ENCODE measurements at regions of chr1 and their contacts with region 1.

Region 1: DNA sequence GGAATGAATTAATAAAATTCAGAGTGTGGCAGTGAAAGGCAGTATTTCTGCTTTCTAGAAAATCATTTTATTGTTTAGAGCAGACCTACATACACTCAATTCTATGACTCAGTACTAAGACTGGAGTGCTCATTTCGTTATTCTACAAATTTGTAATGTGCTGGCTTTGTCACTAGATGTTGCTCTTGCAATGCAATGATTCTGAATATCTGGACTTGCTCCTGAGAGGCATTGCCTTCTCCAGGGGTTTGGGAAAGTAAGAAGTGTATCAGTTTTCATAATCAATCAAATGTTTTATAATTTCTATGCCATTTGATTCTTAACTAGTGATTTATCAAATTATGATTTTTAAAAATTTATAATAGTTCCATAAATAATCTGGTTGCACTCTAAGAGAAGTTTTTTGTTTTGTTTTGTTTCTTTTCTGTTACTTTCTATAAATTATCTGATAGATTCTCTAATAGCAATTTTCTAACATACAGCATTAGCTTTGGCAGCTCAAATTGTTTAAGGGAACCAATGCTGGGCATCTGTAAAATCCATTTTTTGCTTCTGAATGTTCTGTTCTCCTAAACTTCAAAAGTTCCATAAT is 280.5 kb upstream of the SGIP1 start:
- DNase-seq: peak in 1 of 2 experiments; percentile 73
- H3K4me3 ChIP-seq: no peak overlapping the region
- H3K4me1 ChIP-seq: peaks cover 20% of the 10 kb centered on the region
- H3K27me3 ChIP-seq: no peaks in the 10 kb centered on the region

Region 2: DNA sequence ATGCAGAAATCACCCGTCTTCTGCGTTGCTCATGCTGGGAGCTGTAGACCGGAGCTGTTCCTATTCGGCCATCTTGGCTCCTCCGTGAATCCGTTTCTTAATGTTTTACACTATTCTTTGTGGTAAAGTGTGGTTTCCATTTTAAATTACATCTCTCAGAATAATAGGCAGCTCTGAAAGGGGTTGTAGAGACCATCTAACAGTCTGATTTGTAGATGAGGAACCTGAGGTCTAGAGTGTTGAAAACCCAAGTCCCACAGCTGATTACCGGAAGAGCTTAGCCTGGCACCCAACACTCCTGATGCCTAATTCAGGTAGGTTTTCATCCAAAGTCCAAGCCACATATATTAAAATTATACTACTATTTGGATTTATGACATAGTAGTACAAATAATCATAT is 688.9 kb before region 1 on chr1:
- in situ Hi-C with region 1: no loop called
- DNase-seq: no peak
- H3K4me3 ChIP-seq: no peak overlapping the region
- H3K4me1 ChIP-seq: no peaks in the 10 kb centered on the region
- H3K27me3 ChIP-seq: no peaks in the 10 kb centered on the region

Region 3: DNA sequence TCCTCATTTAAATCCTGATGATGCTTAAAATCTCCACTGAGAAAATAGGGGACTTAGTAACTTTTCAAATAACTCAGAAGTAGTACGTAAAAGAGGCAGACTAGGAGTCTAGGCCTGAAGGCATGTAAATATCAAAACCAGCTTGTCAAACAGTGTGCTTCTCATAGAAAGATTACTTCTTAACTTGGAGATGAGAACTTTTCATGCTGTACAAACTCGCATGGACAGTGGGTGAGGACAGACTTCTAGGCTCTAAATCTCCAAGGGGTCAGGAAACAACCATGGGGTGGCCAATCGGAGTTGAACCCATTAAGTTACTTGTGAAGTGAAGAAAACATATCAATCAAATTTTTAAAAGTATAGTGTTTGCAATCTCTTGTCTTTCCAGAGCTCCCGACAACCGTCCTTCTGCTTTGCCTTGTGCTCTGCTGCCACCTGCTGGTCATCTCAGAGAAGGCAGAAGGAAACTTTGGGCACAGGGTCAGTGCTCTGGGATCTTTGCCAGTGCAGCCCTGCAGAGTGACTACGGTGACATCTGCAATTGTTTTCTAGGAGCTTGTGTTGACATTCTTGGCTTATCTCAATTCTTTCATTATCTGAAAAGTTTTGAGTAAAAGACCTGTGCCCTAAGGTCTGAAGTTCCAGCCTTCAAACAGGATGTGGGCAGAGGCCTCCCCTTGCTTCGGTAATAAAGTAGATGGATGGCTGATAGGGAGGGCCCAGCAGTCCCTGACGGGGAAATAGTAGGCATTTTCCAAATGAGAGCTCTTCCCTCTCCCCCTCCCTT is 565.8 kb before region 1 on chr1:
- in situ Hi-C with region 1: no loop called
- DNase-seq: peak; percentile 59 to 90
- H3K4me3 ChIP-seq: no peak overlapping the region
- H3K4me1 ChIP-seq: no peaks in the 10 kb centered on the region
- H3K27me3 ChIP-seq: no peaks in the 10 kb centered on the region

Region 4: GRCh38 chr1:65698590-65698989 is 554.8 kb before region 1 on chr1:
- in situ Hi-C with region 1: no loop called
- DNase-seq: no peak
- H3K4me3 ChIP-seq: no peak overlapping the region
- H3K4me1 ChIP-seq: no peaks in the 10 kb centered on the region
- H3K27me3 ChIP-seq: no peaks in the 10 kb centered on the region; the same call in none of the 2 replicates

Region 5: DNA sequence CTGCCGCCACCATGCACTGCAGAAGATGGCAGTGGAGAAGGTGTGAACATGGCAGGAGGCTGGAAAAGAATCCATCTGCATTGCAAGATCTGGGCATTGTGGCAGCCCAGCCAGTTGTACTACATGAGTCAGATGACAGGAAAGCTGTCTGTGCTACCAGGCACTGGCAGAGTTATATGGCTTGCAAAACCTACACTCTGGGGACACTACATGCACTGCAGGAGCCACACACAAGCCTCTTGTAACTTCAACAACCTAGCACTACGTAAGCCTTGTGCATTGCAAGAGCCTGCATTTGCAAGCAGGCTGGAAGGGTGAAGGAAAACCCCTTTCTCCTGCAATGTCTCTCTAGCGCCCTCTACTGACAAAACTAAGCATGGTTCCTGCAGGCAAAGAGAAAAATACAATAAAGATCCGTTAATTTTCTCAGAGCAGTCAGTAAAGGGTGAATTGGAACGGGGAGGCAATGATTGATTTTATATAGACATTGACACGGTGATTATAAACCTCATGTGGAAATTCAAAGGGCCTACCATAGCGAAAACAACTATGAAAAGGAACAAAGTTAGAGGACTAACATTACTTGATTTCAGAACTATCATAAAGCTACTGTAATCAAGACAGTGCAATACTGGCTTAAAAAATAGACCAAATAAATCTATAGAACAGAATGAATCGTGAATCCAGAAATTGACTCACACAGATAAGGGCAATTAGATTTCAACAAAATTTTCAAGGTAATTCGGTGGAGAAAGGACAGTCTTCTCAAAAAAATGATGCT is 472.6 kb after region 1 on chr1:
- in situ Hi-C with region 1: loop called (anchors 25 kb)
- DNase-seq: peak; percentile 62 to 77
- H3K4me3 ChIP-seq: no peak overlapping the region
- H3K4me1 ChIP-seq: no peaks in the 10 kb centered on the region
- H3K27me3 ChIP-seq: 0 out of 2 replicates have a peak, but pooled peaks cover 2% of the 10 kb centered on the region

Region 6: GRCh38 chr1:66764994-66765578 is 511.7 kb after region 1 on chr1:
- in situ Hi-C with region 1: no loop called
- DNase-seq: peak; percentile 51 to 67
- H3K4me3 ChIP-seq: no peak overlapping the region
- H3K4me1 ChIP-seq: no peaks in the 10 kb centered on the region
- H3K27me3 ChIP-seq: no peaks in the 10 kb centered on the region